Activated CD8-positive, alpha-beta T cell treated with anti-CD3 and anti-CD28 coated beads for 36 hours (primary cell): ENCODE measurements at regions of chr1 and their contacts with region 1.

Region 1: DNA sequence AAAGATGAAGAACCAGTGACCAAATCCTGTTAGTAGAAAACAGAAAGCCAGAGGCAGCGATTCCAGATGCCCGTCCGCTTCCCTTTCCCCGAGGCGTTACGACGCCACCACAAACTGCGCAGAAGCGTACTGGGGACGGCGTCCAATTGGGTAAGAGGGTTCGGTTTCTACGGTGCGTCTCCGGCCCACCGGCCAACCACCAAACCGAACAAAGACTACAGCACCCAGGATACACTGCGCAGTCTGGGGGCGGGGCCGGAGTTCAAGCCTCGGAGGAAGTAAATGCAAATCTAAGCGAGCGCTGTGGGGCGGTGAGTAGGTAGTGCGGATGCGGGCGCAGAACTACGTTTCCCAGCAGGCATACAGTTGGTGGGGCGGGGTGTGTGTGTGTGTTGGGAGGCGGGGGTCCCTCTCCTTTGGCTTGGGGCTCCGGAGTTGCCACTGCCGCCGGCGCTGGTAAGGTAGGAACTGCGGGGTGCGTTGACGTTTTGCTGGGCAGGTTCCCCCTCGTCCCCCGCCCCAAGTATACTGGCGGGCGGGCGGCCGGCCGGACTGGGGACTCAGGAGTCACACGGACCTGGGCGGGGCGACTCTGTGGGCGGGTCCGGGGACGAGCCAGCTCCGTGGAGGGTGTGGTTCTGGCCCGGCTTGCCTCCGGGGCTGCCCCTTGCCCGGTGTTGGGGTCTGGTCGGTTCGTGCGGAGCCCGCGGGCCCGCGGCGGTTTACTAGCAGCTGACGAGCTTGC is at the starts of genes SWT1 and TRMT1L:
- DNase-seq: peak; percentile 100
- ATAC-seq: peak; percentile 94
- H3K4me3 Mint-ChIP-seq: peak within 1 kb of the TSS; percentile 90
- H3K27ac Mint-ChIP-seq: peak within 1 kb of the TSS; percentile 97
- H3K4me1 Mint-ChIP-seq: peaks cover 45% of the 10 kb centered on the region
- H3K27me3 Mint-ChIP-seq: no peaks in the 10 kb centered on the region
- CTCF ChIP-seq: no peak
- total RNA-seq, gene SWT1: 1.8 to 2.5 TPM
- total RNA-seq, gene TRMT1L: 25.6 TPM

Region 2: GRCh38 chr1:184754476-184755225 is 402.4 kb before region 1 on chr1 and contains the start of gene EDEM3:
- CTCF ChIA-PET with region 1: no interaction called
- POLR2A ChIA-PET with region 1: interaction called, 3 read pairs
- intact Hi-C with region 1: loop called (anchors 1 kb)
- DNase-seq: peak; percentile 98
- ATAC-seq: peak; percentile 94
- H3K4me3 Mint-ChIP-seq: peak within 1 kb of the TSS; percentile 95
- H3K27ac Mint-ChIP-seq: peak within 1 kb of the TSS; percentile 97
- H3K4me1 Mint-ChIP-seq: peaks cover 41% of the 10 kb centered on the region
- H3K27me3 Mint-ChIP-seq: peaks cover 4% of the 10 kb centered on the region
- CTCF ChIP-seq: no peak
- total RNA-seq, gene EDEM3: 12.5 to 14.5 TPM

Region 3: GRCh38 chr1:184892116-184892515 is 264.9 kb before region 1 on chr1:
- CTCF ChIA-PET with region 1: no interaction called
- POLR2A ChIA-PET with region 1: no interaction called
- intact Hi-C with region 1: no loop called
- DNase-seq: peak; percentile 42
- ATAC-seq: peak; percentile 68
- H3K4me3 Mint-ChIP-seq: no peak overlapping the region
- H3K27ac Mint-ChIP-seq: peak overlapping the region; percentile 73
- H3K4me1 Mint-ChIP-seq: peaks cover 34% of the 10 kb centered on the region
- H3K27me3 Mint-ChIP-seq: peaks cover 1% of the 10 kb centered on the region
- CTCF ChIP-seq: no peak

Region 4: DNA sequence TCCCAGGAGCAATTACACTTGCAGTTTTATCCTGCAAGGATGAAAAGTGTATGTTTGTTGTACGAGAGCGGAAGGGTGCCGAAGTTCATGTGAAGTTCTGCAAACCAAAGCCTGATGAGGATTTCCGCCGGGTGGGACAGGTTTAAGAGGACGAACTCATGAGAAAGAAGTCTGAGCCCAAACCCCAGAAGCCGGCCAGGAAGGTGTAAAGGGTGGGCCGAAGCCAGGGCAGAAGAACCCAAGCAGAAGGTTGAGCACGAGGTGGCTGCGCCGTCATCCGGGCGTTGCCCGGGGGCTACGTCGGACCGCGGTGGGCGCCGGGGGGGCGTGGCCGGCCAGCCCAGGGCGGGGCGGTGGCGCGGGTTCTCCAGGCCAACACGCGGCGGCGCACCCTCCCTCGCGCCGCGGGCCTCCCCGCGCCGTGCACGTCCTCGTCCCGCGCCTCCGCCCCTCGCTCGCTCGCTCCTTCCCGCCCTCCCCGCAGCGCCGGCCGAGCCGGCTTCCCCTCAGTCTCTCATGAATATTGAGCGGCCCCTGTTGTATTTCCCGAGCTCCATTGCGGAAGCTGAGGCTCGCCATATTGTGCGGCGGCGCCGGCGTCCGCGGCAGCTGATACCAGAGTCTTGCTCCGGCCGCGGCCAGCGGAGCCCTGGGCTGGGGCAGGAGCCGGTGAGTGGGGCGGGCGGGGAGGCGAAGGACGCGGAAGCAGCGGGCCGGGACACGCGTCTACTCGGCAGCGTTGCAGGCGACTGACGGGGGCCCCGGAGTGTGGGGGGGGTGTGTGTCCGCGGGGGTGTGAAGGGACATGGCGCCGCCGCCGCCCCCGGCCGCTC is 111.8 kb before region 1 on chr1 and contains the start of gene RNF2:
- CTCF ChIA-PET with region 1: interaction called, 4 read pairs
- POLR2A ChIA-PET with region 1: interaction called, 3 read pairs
- intact Hi-C with region 1: loop called (anchors 10 kb)
- DNase-seq: peak; percentile 83
- ATAC-seq: peak; percentile 92
- H3K4me3 Mint-ChIP-seq: peak within 1 kb of the TSS; percentile 97
- H3K27ac Mint-ChIP-seq: peak within 1 kb of the TSS; percentile 92
- H3K4me1 Mint-ChIP-seq: peaks cover 32% of the 10 kb centered on the region
- H3K27me3 Mint-ChIP-seq: no peaks in the 10 kb centered on the region
- CTCF ChIP-seq: no peak
- total RNA-seq, gene RNF2: 21.4 to 24.3 TPM